Caco-2 (cell line): ENCODE measurements at regions of chr9 and their contacts with region 1.

Region 1: DNA sequence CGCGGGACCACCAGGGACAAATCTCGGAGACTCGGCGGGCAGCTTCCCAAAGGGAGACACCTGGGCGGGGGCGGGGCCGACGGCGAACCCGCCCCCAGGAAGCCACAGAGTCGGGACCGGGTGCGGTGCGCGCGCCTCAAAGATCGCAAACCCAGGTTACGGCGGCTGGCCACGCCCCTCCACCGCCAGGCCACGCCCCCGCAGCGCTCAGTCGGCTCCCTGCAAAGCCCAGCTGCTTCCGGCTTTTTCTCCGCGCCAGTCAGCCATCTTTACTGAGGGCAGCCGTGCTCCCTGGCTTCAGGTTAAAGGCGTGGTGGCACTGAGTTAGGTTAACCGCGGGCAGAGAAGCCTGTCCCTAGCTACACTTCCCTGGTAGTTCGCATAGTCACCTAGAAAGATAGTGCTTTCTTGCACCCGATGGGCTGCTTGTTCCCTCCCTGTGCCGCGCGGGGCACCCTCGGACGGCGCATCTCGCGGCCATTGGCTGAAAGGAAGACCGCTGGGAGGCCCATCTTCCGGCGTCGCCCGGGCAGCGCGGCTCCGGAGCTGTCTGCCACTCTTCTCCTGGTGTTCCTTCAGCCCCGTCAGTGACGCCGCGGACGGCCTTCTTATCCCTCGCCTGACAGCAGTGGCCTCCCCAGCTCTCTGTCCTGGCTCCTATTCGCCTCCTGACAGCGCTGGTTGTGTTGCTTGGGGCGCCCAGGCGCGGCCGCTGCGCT is at the start of gene TBC1D2:
- DNase-seq: peak; percentile 96 to 99
- H3K4me3 ChIP-seq: peak within 1 kb of the TSS; percentile 64
- H3K4me3 Mint-ChIP-seq: peak within 1 kb of the TSS; percentile 98
- H3K27ac Mint-ChIP-seq: peak within 1 kb of the TSS; percentile 90
- H3K4me1 ChIP-seq: peaks cover 10% of the 10 kb centered on the region
- H3K4me1 Mint-ChIP-seq: peaks cover 15% of the 10 kb centered on the region
- H3K27me3 ChIP-seq: no peaks in the 10 kb centered on the region
- H3K27me3 Mint-ChIP-seq: no peaks in the 10 kb centered on the region
- CTCF ChIP-seq: peak in 1 of 2 experiments; percentile 8
- total RNA-seq, gene TBC1D2: 8.5 and 8.6 TPM in 2 replicates

Region 2: GRCh38 chr9:97982683-97983588 is 272.8 kb before region 1 on chr9 and contains the start of gene ANP32B:
- CTCF ChIA-PET with region 1: no interaction called
- POLR2A ChIA-PET with region 1: no interaction called
- intact Hi-C with region 1: loop called (anchors 10 kb)
- DNase-seq: peak; percentile 95 to 96
- H3K4me3 ChIP-seq: peak within 1 kb of the TSS; percentile 96
- H3K4me3 Mint-ChIP-seq: peak within 1 kb of the TSS; percentile 79
- H3K27ac Mint-ChIP-seq: peak within 1 kb of the TSS; percentile 84
- H3K4me1 ChIP-seq: peaks cover 10% of the 10 kb centered on the region
- H3K4me1 Mint-ChIP-seq: peaks cover 28% of the 10 kb centered on the region
- H3K27me3 ChIP-seq: no peaks in the 10 kb centered on the region
- H3K27me3 Mint-ChIP-seq: no peaks in the 10 kb centered on the region
- CTCF ChIP-seq: peak; percentile 64 to 96
- total RNA-seq, gene ANP32B: 299 and 317 TPM in 2 replicates

Region 3: GRCh38 chr9:98228392-98229089 is 27.2 kb before region 1 on chr9:
- CTCF ChIA-PET with region 1: interaction called, 5 read pairs
- POLR2A ChIA-PET with region 1: interaction called, 4 read pairs
- intact Hi-C with region 1: loop called (anchors 2 kb)
- DNase-seq: peak; percentile 46 to 68
- H3K4me3 ChIP-seq: no peak overlapping the region
- H3K4me3 Mint-ChIP-seq: peak overlapping the region; percentile 16
- H3K27ac Mint-ChIP-seq: peak overlapping the region; percentile 66
- H3K4me1 ChIP-seq: peaks cover 75% of the 10 kb centered on the region
- H3K4me1 Mint-ChIP-seq: peaks cover 38% of the 10 kb centered on the region
- H3K27me3 ChIP-seq: no peaks in the 10 kb centered on the region
- H3K27me3 Mint-ChIP-seq: no peaks in the 10 kb centered on the region
- CTCF ChIP-seq: no peak

Region 4: GRCh38 chr9:98234245-98234825 is 21.4 kb before region 1 on chr9:
- CTCF ChIA-PET with region 1: interaction called, 13 read pairs
- POLR2A ChIA-PET with region 1: interaction called, 3 read pairs
- intact Hi-C with region 1: loop called (anchors 2 kb)
- DNase-seq: no peak
- H3K4me3 ChIP-seq: no peak overlapping the region
- H3K4me3 Mint-ChIP-seq: no peak overlapping the region
- H3K27ac Mint-ChIP-seq: no peak overlapping the region
- H3K4me1 ChIP-seq: peaks cover 56% of the 10 kb centered on the region
- H3K4me1 Mint-ChIP-seq: peaks cover 26% of the 10 kb centered on the region
- H3K27me3 ChIP-seq: no peaks in the 10 kb centered on the region
- H3K27me3 Mint-ChIP-seq: no peaks in the 10 kb centered on the region
- CTCF ChIP-seq: peak; percentile 21 to 44

Region 5: DNA sequence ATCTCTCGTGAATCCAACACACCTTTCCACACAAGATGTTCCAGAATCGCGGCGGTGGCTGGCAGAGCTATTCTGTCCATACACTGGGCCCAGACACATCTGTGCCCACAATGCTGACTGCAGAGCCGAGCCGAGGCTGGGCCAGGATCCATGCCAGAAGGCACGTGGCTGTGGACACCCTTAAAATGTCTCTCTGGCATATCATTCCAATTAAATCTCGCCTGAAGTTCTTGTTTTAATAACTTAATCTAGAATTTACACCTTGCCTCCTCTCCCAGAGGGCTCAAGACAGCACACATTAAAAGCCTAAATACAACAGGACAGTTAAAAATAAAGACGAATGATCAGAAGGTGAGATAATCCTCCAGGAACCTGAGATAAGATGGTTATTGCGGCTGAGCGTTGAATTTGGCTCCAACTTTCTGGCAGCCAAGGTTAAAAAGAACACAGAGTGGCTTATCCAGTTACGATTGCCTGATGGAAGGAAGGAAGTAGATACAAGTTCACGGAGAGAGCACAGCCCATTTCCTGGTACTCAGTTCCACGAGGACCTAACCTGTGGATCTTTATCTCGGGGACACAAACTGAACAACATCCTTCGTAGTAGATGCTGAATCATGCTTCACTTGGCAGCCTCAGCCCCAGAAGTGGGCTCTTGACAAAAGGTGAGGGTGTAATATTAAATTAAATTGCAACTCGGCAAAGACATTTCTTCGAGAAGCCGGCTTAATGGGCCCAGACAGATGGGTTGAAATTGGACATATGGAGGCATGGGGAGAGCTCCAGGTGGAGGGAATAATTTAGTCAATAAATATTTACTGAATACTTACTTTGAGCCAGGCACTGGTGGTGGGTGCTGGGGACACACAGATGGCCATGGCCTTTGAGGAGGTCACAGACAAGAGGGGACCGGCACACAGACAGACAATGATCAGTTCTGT is 85.7 kb after region 1 on chr9:
- CTCF ChIA-PET with region 1: no interaction called
- POLR2A ChIA-PET with region 1: no interaction called
- intact Hi-C with region 1: no loop called
- DNase-seq: no peak
- H3K4me3 ChIP-seq: no peak overlapping the region
- H3K4me3 Mint-ChIP-seq: no peak overlapping the region
- H3K27ac Mint-ChIP-seq: no peak overlapping the region
- H3K4me1 ChIP-seq: no peaks in the 10 kb centered on the region
- H3K4me1 Mint-ChIP-seq: no peaks in the 10 kb centered on the region
- H3K27me3 ChIP-seq: no peaks in the 10 kb centered on the region; the same call in 1 of the 2 replicates
- H3K27me3 Mint-ChIP-seq: peaks cover 16% of the 10 kb centered on the region
- CTCF ChIP-seq: no peak